Mucosa of descending colon (tissue), 3 donors: ENCODE measurements at regions of chr9 and their contacts with region 1.

Region 1: DNA sequence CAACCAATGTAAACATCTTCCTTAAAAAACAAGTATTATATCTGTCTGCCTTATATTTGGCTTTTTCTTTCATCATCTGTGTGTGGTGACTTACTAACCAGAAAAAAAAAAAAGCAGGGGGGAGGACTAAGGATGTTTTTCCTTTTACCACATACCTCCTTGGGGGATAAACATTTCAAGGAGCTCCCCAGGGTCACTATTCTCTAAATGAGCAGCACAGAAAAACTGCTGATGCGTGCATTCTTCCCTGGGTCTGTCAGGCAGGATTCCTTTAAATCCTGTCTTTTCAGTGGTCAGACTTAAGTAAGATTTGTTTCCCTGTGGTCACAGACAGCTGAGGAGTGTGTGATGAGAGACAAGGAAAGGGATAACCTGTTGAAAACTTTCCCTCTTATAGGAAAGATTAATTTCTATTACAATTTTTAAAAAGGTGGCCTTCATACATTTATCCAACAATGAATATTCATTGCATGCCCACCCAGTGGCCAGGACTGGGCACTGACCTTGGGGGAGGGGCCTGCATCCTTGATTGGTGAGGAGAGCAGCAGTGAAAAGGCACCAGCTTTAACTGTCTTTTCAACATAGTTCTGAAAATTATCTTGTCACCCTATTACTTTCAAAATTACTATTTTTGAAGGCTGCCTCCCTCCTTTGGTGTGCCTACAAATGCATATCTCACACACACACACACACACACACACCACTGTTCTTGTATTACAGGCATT is 123.1 kb downstream of the TLE4 start:
- DNase-seq: no peak
- ATAC-seq: no peak
- H3K4me3 ChIP-seq: no peak overlapping the region
- H3K4me1 ChIP-seq: no peaks in the 10 kb centered on the region
- CTCF ChIP-seq: no peak

Region 2: DNA sequence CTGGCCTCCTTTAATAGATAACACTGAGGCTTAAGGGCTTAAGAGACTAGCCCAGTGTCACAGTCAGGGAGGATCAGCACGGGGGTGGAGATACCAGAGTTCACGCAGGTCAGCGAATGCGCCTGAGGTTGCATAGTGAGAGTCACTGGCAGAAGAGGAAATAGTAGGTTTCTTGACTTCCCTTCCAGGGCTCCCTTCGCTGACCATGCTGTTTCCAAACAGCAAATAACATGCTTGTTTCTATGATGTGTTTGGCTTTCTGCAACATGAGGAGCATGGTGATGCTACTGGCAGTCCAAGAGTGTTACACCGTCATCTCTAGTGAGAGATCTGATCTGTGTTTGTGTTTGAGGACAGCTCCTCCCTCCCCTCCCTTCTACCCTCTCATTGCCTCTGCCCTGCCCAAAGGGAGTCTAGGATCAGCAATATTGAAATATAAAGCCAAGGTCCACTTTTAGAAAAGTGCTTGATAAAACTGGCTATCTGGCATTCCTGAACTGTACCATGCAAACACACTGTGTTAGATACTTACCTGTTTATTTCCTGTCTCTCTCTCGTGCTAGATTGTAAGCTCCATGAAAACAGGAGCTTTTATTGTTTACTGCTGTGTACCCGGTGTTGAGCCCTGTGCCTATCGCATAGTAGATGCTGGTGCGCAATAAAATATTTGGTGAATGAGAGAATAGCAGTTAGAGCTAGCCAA is 110.7 kb before region 1 on chr9:
- intact Hi-C with region 1: loop called in 1 of 2 experiments (anchors 10 kb)
- DNase-seq: peak in 2 of 3 donors; percentile 30 to 67
- ATAC-seq: peak; percentile 76
- H3K4me3 ChIP-seq: no peak overlapping the region
- H3K4me1 ChIP-seq: peaks cover 4% of the 10 kb centered on the region
- CTCF ChIP-seq: no peak